Endothelial cell of umbilical vein (primary cell): ENCODE measurements at regions of chr15 and their contacts with region 1.

Region 1: DNA sequence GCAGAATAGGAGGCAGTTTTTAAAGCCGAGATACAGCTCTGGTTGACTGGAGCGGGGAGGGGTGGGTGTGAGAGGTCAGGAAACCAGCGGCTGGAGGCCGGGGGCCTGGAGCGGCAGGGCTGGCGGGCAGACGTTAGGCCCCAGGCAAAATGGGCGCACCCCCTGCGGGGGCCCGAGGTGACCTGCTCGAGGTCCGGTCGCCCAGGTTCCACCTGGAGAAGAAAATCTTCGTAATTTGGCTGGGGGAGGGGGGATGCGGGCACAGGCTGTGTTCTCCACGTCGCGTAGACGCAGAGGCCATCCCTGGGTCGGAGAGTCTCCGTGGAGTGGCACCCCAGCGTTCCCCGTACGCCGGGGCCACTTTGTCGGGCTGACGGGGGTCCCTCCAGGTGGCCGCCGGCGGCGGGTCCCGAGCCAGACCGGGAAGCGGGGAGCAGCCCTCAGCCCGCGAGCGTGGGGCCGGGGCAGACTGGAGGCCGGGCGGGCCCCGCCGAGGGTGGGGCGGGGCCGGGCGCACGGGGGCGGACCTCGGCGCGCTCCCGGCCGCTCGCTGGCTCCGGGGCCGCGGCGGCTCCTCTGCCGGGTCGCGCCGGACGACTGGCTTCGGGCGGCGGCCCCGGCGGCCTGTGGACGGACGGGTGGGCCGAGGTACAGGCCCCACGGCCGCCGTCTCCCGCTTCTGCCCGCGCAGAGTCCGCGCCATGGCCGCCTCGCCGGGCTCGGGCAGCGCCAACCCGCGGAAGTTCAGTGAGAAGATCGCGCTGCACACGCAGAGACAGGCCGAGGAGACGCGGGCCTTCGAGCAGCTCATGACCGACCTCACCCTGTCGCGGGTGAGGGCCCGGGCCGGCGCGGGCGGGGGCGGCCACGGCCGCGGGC is at the start of gene CRTC3:
- DNase-seq: peak; percentile 49
- H3K4me3 ChIP-seq: peak within 1 kb of the TSS; percentile 46 to 81 (median 65)
- H3K27ac ChIP-seq: peak within 1 kb of the TSS; percentile 50
- H3K4me1 ChIP-seq: peaks cover 9% of the 10 kb centered on the region
- H3K27me3 ChIP-seq: no peaks in the 10 kb centered on the region
- CTCF ChIP-seq: peak in 1 of 2 donors; percentile 11
- POLR2A ChIP-seq: peak; percentile 74
- total RNA-seq, gene CRTC3: 25.9 and 26.4 TPM in 2 replicates

Region 2: DNA sequence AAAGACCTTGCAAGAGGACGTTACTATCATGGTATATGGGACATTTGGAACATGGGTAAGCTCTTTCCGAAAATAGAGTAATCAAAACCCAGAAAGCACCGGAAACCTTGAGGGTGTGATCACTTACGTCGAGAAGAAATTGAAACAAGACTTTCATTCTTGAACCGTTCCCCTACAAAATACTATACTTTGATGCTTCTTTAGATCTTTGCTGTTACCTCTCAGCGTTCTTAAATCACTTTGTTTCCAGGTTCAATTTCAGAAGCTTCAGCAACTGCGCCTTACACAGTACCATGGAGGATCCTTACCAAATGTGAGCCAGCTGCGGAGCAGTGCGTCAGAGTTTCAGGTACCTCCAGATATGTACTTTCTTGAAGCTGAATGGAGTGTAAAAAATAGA is 10.2 kb after region 1 on chr15:
- CTCF ChIA-PET with region 1: interaction called, 13 read pairs
- POLR2A ChIA-PET with region 1: no interaction called
- dilution Hi-C with region 1: no loop called
- intact Hi-C with region 1: no loop called
- DNase-seq: no peak
- H3K4me3 ChIP-seq: no peak overlapping the region
- H3K27ac ChIP-seq: no peak overlapping the region
- H3K4me1 ChIP-seq: peaks cover under 1% of the 10 kb centered on the region
- H3K27me3 ChIP-seq: no peaks in the 10 kb centered on the region
- CTCF ChIP-seq: no peak
- POLR2A ChIP-seq: no peak

Region 3: DNA sequence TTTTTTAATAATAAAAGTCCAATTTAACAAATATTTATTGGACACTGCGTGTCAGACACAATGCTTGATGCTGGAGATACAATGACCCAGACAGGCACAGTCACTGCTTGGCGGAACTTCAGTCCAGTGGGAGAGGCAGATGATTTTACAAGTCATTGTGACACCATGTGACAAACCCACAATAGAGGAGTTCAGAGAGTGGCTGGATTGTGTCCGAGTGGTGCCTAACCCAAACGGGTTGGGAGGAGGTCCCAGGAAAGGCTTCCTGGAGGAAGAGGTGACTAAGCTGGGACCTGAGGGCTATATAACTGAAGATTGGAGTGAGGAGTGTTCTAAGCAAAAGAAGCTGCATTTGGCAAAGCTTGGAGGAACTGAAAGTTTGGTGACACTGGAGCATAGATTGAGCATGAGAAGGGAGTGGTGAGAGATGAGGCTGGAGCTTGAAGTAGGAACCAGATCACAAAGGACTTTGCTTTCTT is 41.5 kb after region 1 on chr15:
- CTCF ChIA-PET with region 1: no interaction called
- POLR2A ChIA-PET with region 1: no interaction called
- dilution Hi-C with region 1: no loop called
- intact Hi-C with region 1: loop called (anchors 5 kb)
- DNase-seq: no peak
- H3K4me3 ChIP-seq: no peak overlapping the region
- H3K27ac ChIP-seq: no peak overlapping the region
- H3K4me1 ChIP-seq: peaks cover 9% of the 10 kb centered on the region
- H3K27me3 ChIP-seq: no peaks in the 10 kb centered on the region
- CTCF ChIP-seq: no peak
- POLR2A ChIP-seq: no peak